ENCODE measurements at regions of chr21 and their contacts with region 1.

Region 1: DNA sequence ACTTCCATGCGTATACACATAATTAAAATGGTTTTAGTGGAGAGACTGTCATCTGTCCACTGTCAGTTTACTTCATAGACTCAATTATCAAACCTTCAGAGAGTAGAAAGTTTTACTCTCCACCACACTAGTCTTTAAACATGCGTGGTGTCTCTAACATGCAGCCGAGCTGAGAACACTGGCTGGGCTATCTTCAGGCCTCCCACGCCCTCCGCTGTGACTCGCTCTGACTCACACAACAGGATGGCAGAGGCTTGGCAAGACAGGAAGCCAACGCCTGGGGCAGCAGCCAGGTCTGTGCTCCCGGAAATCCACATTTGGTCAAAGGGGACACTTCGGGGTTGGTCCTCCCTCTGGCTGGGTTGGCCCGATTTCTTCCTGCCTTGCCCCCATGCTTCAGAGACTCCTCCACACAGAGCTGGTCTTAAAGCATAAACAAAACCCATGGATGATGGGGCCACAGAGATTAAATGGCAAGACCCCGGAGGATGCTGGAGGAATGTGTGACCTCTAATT is 22.7 kb upstream of the IFNGR2 start:
- DNase-seq: peak; percentile 97
- H3K4me3 Mint-ChIP-seq: peak overlapping the region; percentile 44
- H3K27ac Mint-ChIP-seq: peak overlapping the region; percentile 81
- H3K4me1 Mint-ChIP-seq: peaks cover 61% of the 10 kb centered on the region
- H3K27me3 Mint-ChIP-seq: peaks cover 10% of the 10 kb centered on the region

Region 2: DNA sequence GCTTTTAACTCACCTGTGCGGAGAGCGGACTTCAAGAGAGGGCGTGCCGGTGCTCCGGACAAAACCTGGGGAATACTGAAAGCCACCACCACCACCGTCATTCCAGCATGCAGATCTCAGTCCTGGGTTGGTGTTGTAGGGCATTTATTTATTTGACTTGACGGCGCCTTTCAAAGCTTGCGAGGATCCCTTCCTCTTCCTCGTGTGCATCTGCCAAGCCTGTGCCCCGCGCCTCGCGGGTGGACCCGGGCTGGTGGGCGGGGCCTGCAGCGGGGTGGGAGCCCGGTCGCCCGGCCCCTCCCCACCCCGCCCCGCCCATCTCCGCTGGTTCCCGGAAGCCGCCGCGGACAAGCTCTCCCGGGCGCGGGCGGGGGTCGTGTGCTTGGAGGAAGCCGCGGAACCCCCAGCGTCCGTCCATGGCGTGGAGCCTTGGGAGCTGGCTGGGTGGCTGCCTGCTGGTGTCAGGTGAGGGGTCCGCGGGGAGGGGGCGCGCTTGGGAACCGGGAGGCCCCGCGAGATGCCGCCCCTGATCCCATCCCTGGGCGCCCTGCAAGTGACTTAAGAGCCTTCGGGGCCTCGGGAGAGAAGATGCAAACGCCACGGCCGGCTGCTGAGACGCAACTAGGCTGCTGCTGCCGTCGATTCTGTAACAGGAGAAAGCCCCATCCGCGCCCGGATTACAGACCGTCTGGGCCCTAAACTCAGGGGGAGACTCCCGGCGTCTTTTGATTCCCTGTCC is 114.3 kb before region 1 on chr21 and contains the start of gene IL10RB:
- CTCF ChIA-PET with region 1: no interaction called
- POLR2A ChIA-PET with region 1: no interaction called
- intact Hi-C with region 1: loop called (anchors 2 kb)
- DNase-seq: peak; percentile 78
- H3K4me3 Mint-ChIP-seq: peak within 1 kb of the TSS; percentile 99
- H3K27ac Mint-ChIP-seq: peak within 1 kb of the TSS; percentile 97
- H3K4me1 Mint-ChIP-seq: peaks cover 55% of the 10 kb centered on the region
- H3K27me3 Mint-ChIP-seq: no peaks in the 10 kb centered on the region
- total RNA-seq, gene IL10RB: 31.3 to 32.5 TPM

Region 3: DNA sequence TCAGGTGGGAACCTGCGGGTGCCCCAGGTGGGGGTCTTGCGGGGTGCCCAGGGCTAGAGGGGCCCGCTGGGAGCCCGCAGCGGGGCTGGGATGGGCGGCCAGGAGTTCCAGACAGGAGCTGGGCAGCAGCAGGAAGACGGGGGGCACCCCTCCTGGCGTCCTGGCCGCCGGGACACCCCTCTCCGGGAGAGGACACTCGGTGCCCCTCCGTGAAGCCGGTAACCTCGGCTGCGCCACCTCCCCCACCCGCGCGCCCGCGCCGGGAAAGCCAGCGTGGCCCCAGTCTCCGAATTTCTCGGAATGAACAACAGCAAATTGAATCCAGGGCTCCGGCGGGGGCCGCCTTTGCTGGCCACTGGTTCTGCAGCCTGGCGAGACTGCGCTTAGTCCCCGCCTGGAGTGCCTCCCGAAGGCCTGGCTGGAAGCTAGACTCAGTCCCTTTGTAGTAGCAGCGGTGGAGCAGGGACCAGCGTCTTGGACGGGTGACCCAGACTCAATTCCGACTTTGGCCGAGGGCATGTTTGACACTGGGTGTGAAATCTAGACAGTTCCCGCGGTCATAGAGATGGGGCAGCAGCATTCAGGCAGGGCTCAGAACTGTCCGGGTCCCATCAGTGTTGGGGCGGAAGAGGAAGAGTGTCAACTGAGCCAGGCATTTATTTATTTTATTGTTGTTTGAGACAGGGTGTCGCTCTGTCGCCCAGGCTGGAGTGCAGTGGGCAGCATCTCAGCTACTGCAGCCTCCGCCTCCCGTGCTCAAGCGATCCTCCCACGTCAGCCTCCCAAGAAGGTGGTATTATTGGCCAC is 23.4 kb after region 1 on chr21:
- CTCF ChIA-PET with region 1: interaction called, 6 read pairs
- POLR2A ChIA-PET with region 1: interaction called, 10 read pairs
- intact Hi-C with region 1: loop called (anchors 1 kb)
- DNase-seq: peak; percentile 59
- H3K4me3 Mint-ChIP-seq: peak overlapping the region; percentile 90
- H3K27ac Mint-ChIP-seq: peak overlapping the region; percentile 81
- H3K4me1 Mint-ChIP-seq: peaks cover 40% of the 10 kb centered on the region
- H3K27me3 Mint-ChIP-seq: peaks cover 16% of the 10 kb centered on the region

Region 4: GRCh38 chr21:33441489-33442477 is 61.2 kb after region 1 on chr21:
- CTCF ChIA-PET with region 1: interaction called, 12 read pairs
- POLR2A ChIA-PET with region 1: no interaction called
- intact Hi-C with region 1: loop called (anchors 2 kb)
- DNase-seq: no peak
- H3K4me3 Mint-ChIP-seq: no peak overlapping the region
- H3K27ac Mint-ChIP-seq: no peak overlapping the region
- H3K4me1 Mint-ChIP-seq: peaks cover 3% of the 10 kb centered on the region
- H3K27me3 Mint-ChIP-seq: no peaks in the 10 kb centered on the region

Region 5: DNA sequence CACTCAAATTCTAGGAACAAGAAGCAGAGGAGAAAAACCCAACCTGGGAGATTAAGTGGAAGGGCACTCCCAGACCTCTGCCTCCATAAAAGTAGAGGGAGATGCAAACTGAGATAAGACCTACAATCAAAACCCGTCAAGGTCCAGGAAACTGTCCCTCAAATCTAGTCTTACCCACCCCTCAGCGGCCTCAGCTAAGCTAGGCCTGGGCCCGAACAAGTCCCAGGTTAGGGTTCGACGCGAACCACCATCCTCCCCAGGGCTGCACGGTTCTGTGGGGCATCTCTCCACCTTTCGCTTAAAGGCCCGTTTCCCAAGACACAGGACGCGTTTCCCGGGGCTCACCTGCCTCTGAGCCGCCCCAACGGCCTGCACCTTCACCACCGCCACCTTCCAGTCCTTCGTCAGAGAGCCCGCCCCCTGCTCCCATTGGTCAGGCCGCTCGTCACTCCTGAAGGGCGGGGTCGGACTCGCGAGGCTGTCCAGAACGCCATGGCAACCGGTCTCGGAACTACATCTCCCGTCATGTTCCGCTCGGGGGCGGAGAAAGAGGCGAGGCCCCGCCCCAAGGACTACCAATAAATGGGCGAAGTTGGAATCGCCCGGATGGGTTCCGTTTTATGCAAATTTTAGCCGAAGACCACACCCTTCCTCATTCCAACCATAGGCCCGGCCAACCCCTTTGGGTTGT is 260.9 kb after region 1 on chr21 and contains the start of gene CRYZL1:
- CTCF ChIA-PET with region 1: no interaction called
- POLR2A ChIA-PET with region 1: no interaction called
- intact Hi-C with region 1: loop called (anchors 5 kb)
- DNase-seq: peak; percentile 100
- H3K4me3 Mint-ChIP-seq: peak within 1 kb of the TSS; percentile 86
- H3K27ac Mint-ChIP-seq: peak within 1 kb of the TSS; percentile 93
- H3K4me1 Mint-ChIP-seq: peaks cover 24% of the 10 kb centered on the region
- H3K27me3 Mint-ChIP-seq: peaks cover 16% of the 10 kb centered on the region
- total RNA-seq, gene CRYZL1: 32.8 to 34.9 TPM

Measured in activated CD4-positive, alpha-beta memory T cell treated with anti-CD3 and anti-CD28 coated beads for 36 hours (primary cell).